MCF 10A (cell line): ENCODE measurements at regions of chr11 and their contacts with region 1.

Region 1: DNA sequence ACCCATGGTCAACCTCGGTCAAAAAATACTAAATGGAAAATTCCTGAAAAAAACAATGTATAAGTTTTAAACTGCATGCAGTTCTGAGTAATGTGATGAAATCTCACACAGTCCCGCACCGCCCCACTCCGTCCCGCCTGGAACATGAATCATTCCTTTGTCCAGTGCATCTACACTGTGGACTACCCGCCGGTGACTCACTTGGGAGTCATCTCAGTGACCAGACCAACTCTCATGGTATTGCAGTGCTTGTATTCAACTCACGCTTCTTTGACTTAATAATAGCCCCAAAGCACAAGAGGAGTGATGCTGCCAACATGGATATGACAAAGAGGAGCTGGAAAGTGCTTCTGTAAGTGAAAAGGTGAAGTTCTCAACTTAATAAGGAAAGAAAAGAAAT is 48.8 kb downstream of the ARHGAP32 start:
- DNase-seq: peak; percentile 100
- H3K4me3 Mint-ChIP-seq: peak overlapping the region; percentile 70
- H3K27ac Mint-ChIP-seq: peak overlapping the region; percentile 94
- H3K4me1 Mint-ChIP-seq: peaks cover 32% of the 10 kb centered on the region
- H3K27me3 Mint-ChIP-seq: no peaks in the 10 kb centered on the region
- CTCF ChIP-seq: no peak

Region 2: DNA sequence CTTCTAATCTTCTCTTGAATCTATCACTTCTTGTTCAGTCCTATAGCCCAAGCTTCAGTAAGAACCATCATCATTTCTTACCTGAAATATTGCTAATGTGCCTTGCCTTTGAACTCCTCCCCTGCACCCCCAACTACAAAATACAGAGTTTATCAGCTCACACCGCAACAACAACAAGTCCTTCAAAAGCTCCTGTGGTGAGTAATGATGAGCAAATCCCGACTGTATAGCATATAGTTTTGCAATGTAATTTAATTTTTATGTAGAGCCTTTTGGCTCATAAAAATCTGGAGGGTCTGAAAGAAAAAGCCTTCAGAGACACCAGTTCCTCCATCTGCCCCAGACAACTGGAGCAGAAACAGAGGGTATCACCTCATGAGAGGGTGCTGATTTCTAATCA is 75.9 kb before region 1 on chr11:
- CTCF ChIA-PET with region 1: no interaction called
- POLR2A ChIA-PET with region 1: no interaction called
- intact Hi-C with region 1: no loop called
- DNase-seq: peak; percentile 36
- H3K4me3 Mint-ChIP-seq: no peak overlapping the region
- H3K27ac Mint-ChIP-seq: peak overlapping the region; percentile 49
- H3K4me1 Mint-ChIP-seq: peaks cover 15% of the 10 kb centered on the region
- H3K27me3 Mint-ChIP-seq: no peaks in the 10 kb centered on the region
- CTCF ChIP-seq: no peak

Region 3: DNA sequence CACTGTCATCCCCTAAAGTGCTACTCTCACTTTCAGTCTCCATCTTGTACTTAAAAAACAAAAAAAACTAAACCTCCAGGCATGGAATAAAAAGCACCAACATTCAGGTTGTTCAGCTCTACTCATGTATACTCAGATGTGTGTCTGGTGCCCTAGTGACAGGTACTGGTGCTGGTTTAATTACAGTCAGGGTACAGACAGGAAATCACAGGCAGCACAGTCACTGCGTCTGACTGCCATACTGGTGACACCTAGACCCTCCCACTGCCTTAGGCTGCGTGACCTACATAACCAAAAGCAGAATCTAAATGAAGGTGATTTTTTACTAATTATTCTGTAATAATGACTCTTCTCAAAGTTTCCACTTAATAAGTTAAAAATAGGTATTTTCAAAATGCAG is 48.8 kb after region 1 on chr11 and contains the start of gene ARHGAP32:
- CTCF ChIA-PET with region 1: interaction called, 3 read pairs
- POLR2A ChIA-PET with region 1: interaction called, 103 read pairs
- intact Hi-C with region 1: loop called (anchors 2 kb)
- DNase-seq: peak; percentile 51
- H3K4me3 Mint-ChIP-seq: no peak within 1 kb of the TSS
- H3K27ac Mint-ChIP-seq: no peak within 1 kb of the TSS
- H3K4me1 Mint-ChIP-seq: peaks cover 12% of the 10 kb centered on the region
- H3K27me3 Mint-ChIP-seq: no peaks in the 10 kb centered on the region
- CTCF ChIP-seq: no peak
- total RNA-seq, gene ARHGAP32: 62.6 and 71.3 TPM in 2 replicates